ENCODE measurements at regions of chr12 and their contacts with region 1.

Region 1: GRCh38 chr12:7933255-7933729 is 2.7 kb downstream of the SLC2A3 start:
- DNase-seq: peak; percentile 85
- H3K4me3 Mint-ChIP-seq: no peak overlapping the region
- H3K27ac Mint-ChIP-seq: no peak overlapping the region
- H3K4me1 Mint-ChIP-seq: peaks cover 29% of the 10 kb centered on the region
- H3K27me3 Mint-ChIP-seq: no peaks in the 10 kb centered on the region

Region 2: DNA sequence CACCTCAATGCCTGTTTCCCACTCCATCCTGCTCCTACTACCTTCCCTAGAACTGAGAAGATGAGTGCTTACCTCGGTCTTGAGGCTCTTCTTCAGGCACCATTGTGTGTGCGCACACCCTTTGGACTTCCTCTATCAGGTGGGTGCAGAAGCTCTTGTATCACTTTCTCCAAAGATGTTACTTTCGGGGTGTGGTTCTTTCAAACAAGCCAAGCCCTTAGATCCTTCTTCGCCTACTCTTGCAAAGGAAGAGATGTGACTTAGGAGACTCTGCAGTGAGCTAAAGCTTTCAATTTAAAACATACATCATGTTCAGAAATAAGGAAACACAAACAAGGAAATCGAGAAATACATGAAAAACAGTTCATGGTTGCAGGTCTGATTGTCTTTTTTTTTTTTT is 186.0 kb before region 1 on chr12 and contains the start of gene CLEC4C:
- CTCF ChIA-PET with region 1: no interaction called
- POLR2A ChIA-PET with region 1: no interaction called
- intact Hi-C with region 1: no loop called
- DNase-seq: no peak
- H3K4me3 Mint-ChIP-seq: no peak within 1 kb of the TSS
- H3K27ac Mint-ChIP-seq: no peak within 1 kb of the TSS
- H3K4me1 Mint-ChIP-seq: no peaks in the 10 kb centered on the region
- H3K27me3 Mint-ChIP-seq: peaks cover 2% of the 10 kb centered on the region
- total RNA-seq, gene CLEC4C: not detected

Region 3: GRCh38 chr12:7769999-7770398 is 163.3 kb before region 1 on chr12:
- CTCF ChIA-PET with region 1: no interaction called
- POLR2A ChIA-PET with region 1: no interaction called
- intact Hi-C with region 1: no loop called
- DNase-seq: no peak
- H3K4me3 Mint-ChIP-seq: no peak overlapping the region
- H3K27ac Mint-ChIP-seq: no peak overlapping the region
- H3K4me1 Mint-ChIP-seq: no peaks in the 10 kb centered on the region
- H3K27me3 Mint-ChIP-seq: no peaks in the 10 kb centered on the region

Region 4: GRCh38 chr12:7916936-7917335 is 16.4 kb before region 1 on chr12:
- CTCF ChIA-PET with region 1: interaction called, 14 read pairs
- POLR2A ChIA-PET with region 1: interaction called, 6 read pairs
- intact Hi-C with region 1: no loop called
- DNase-seq: no peak
- H3K4me3 Mint-ChIP-seq: no peak overlapping the region
- H3K27ac Mint-ChIP-seq: no peak overlapping the region
- H3K4me1 Mint-ChIP-seq: peaks cover 20% of the 10 kb centered on the region
- H3K27me3 Mint-ChIP-seq: no peaks in the 10 kb centered on the region

Region 5: DNA sequence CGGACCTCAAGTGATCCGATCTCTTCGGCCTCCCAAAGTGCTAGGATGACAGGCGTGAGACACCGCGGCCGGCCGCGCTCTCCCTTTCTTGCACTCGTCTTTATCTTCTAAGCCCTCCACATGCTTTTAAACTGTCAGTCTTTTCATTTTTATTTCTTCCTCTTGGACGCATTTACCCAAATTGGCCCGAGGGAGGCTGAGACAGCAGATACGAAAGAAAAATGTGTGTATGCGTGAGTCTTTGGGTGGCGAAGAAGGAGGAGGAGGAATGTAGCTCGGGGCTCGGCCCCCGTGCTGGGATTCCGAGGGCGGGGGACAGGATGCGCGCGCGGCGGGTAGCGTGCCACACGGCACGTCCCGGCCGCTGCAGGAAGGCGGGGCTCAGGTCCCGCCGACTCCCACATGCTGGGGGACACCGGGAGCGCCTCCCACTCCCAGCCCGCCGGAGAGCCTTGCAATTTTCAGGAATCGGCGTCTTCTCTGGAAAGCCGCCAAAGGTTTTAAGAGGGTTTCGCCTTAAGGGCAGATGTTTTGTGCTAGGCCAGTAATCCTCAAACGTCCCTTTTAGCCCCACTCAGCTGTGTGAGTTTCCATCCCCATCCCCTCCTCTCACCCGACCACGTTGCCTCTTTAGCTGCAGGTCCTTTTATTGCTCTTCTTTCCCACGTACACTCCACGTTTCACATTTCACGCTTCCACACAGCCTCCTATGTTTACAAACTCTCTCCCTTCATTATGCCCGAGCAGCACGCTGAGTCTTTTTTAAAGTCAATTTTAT is 37.4 kb after region 1 on chr12:
- CTCF ChIA-PET with region 1: interaction called, 47 read pairs
- POLR2A ChIA-PET with region 1: interaction called, 185 read pairs
- intact Hi-C with region 1: loop called (anchors 1 kb)
- DNase-seq: peak; percentile 92
- H3K4me3 Mint-ChIP-seq: peak overlapping the region; percentile 77
- H3K27ac Mint-ChIP-seq: peak overlapping the region; percentile 98
- H3K4me1 Mint-ChIP-seq: peaks cover 34% of the 10 kb centered on the region
- H3K27me3 Mint-ChIP-seq: no peaks in the 10 kb centered on the region

Region 6: GRCh38 chr12:7995266-7995963 is 62.1 kb after region 1 on chr12:
- CTCF ChIA-PET with region 1: interaction called, 135 read pairs
- POLR2A ChIA-PET with region 1: interaction called, 65 read pairs
- intact Hi-C with region 1: loop called (anchors 1 kb)
- DNase-seq: peak; percentile 93
- H3K4me3 Mint-ChIP-seq: no peak overlapping the region
- H3K27ac Mint-ChIP-seq: no peak overlapping the region
- H3K4me1 Mint-ChIP-seq: peaks cover 24% of the 10 kb centered on the region
- H3K27me3 Mint-ChIP-seq: no peaks in the 10 kb centered on the region

Measured in activated CD4-positive, alpha-beta memory T cell treated with anti-CD3 and anti-CD28 coated beads for 36 hours (primary cell).